CD8-positive, alpha-beta T cell (primary cell): ENCODE measurements at regions of chrX and their contacts with region 1.

Region 1: DNA sequence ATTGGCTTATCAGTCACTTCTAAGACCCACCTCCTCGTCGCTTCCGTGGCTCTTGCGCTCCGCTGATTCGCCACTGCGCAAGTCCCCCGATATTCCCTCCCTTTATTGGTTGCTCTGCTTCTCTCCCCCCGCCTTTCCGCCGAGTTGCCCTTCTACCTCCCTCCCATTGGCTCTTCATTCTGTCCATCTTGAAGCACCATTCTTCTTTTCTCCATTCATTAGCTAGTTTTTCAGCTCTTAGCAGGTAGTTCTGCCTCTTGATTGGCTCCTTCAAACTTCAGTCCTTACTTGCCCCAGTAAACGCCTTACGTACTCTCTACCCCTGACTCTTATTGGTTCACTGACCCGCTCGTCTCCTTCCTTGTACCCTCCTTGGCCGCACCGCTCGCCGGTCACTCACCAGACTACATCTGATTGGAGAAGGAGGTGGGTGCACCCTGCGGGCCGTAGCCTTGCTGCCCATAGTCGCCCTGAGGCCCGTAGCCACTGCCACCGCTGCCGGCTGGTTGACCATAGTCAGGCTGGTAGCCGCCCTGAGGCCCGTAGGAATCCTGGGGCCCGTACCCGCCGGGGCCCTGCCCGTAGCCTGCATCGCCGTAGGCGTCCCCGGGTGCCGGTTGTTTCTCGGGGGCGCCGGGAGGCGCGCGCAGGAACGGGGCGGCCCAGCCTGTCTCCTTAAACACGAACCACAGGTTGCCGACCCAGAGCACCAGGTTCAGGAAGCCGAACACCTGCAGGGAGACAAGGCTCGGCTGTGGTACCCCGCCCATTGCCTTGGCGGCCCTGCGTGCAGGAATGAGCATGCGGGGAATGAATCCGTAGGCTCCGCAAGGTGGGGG is 5.1 kb upstream of the PRICKLE3 start:
- DNase-seq: peak; percentile 62 to 97 (median 78)
- ATAC-seq: peak; percentile 88
- H3K4me3 ChIP-seq: peak overlapping the region; percentile 71 to 77
- H3K4me3 Mint-ChIP-seq: peak overlapping the region; percentile 92
- H3K27ac ChIP-seq: peak overlapping the region; percentile 61 to 72
- H3K27ac Mint-ChIP-seq: peak overlapping the region; percentile 93
- H3K4me1 ChIP-seq: peaks cover 15% of the 10 kb centered on the region
- H3K4me1 Mint-ChIP-seq: peaks cover 26% of the 10 kb centered on the region
- H3K27me3 ChIP-seq: no peaks in the 10 kb centered on the region
- H3K27me3 Mint-ChIP-seq: no peaks in the 10 kb centered on the region
- CTCF ChIP-seq: no peak

Region 2: GRCh38 chrX:48933757-48934156 is 257.5 kb before region 1 on chrX:
- CTCF ChIA-PET with region 1: no interaction called
- POLR2A ChIA-PET with region 1: no interaction called
- intact Hi-C with region 1: no loop called
- DNase-seq: no peak
- ATAC-seq: no peak
- H3K4me3 ChIP-seq: no peak overlapping the region
- H3K4me3 Mint-ChIP-seq: peak overlapping the region; percentile 8
- H3K27ac ChIP-seq: peak overlapping the region in 1 of 2 experiments; percentile 21
- H3K27ac Mint-ChIP-seq: peak overlapping the region; percentile 81
- H3K4me1 ChIP-seq: peaks cover 46% of the 10 kb centered on the region
- H3K4me1 Mint-ChIP-seq: peaks cover 46% of the 10 kb centered on the region
- H3K27me3 ChIP-seq: no peaks in the 10 kb centered on the region
- H3K27me3 Mint-ChIP-seq: no peaks in the 10 kb centered on the region
- CTCF ChIP-seq: no peak

Region 3: GRCh38 chrX:49120099-49120498 is 71.2 kb before region 1 on chrX:
- CTCF ChIA-PET with region 1: no interaction called
- POLR2A ChIA-PET with region 1: no interaction called
- intact Hi-C with region 1: loop called in 1 of 2 experiments (anchors 5 kb)
- DNase-seq: no peak
- ATAC-seq: no peak
- H3K4me3 ChIP-seq: no peak overlapping the region
- H3K4me3 Mint-ChIP-seq: no peak overlapping the region
- H3K27ac ChIP-seq: no peak overlapping the region
- H3K27ac Mint-ChIP-seq: no peak overlapping the region
- H3K4me1 ChIP-seq: peaks cover 26% of the 10 kb centered on the region
- H3K4me1 Mint-ChIP-seq: peaks cover 48% of the 10 kb centered on the region
- H3K27me3 ChIP-seq: no peaks in the 10 kb centered on the region
- H3K27me3 Mint-ChIP-seq: no peaks in the 10 kb centered on the region
- CTCF ChIP-seq: no peak

Region 4: GRCh38 chrX:49163555-49164419 is 27.5 kb before region 1 on chrX:
- CTCF ChIA-PET with region 1: interaction called, 8 read pairs
- POLR2A ChIA-PET with region 1: interaction called, 6 read pairs
- intact Hi-C with region 1: loop called (anchors 2 kb)
- DNase-seq: peak in 8 of 9 experiments; percentile 67 to 91 (median 82)
- ATAC-seq: peak; percentile 54
- H3K4me3 ChIP-seq: peak overlapping the region; percentile 49
- H3K4me3 Mint-ChIP-seq: peak overlapping the region; percentile 81
- H3K27ac ChIP-seq: peak overlapping the region; percentile 56 to 84
- H3K27ac Mint-ChIP-seq: peak overlapping the region; percentile 92
- H3K4me1 ChIP-seq: peaks cover 21% of the 10 kb centered on the region
- H3K4me1 Mint-ChIP-seq: peaks cover 27% of the 10 kb centered on the region
- H3K27me3 ChIP-seq: no peaks in the 10 kb centered on the region
- H3K27me3 Mint-ChIP-seq: no peaks in the 10 kb centered on the region
- CTCF ChIP-seq: peak; percentile 57

Region 5: GRCh38 chrX:49269010-49269767 is 77.9 kb after region 1 on chrX:
- CTCF ChIA-PET with region 1: interaction called, 4 read pairs
- POLR2A ChIA-PET with region 1: interaction called, 4 read pairs
- intact Hi-C with region 1: loop called (anchors 1 to 5 kb)
- DNase-seq: peak; percentile 84 to 98 (median 91)
- ATAC-seq: peak; percentile 84
- H3K4me3 ChIP-seq: peak overlapping the region; percentile 71 to 84
- H3K4me3 Mint-ChIP-seq: peak overlapping the region; percentile 94
- H3K27ac ChIP-seq: peak overlapping the region; percentile 100
- H3K27ac Mint-ChIP-seq: peak overlapping the region; percentile 100
- H3K4me1 ChIP-seq: peaks cover 44% of the 10 kb centered on the region
- H3K4me1 Mint-ChIP-seq: peaks cover 50% of the 10 kb centered on the region
- H3K27me3 ChIP-seq: no peaks in the 10 kb centered on the region
- H3K27me3 Mint-ChIP-seq: no peaks in the 10 kb centered on the region
- CTCF ChIP-seq: no peak

Region 6: GRCh38 chrX:49878834-49879659 is 687.8 kb after region 1 on chrX and contains the start of gene USP27X:
- CTCF ChIA-PET with region 1: no interaction called
- POLR2A ChIA-PET with region 1: no interaction called
- intact Hi-C with region 1: loop called in 1 of 2 experiments (anchors 10 kb)
- DNase-seq: peak; percentile 55 to 92 (median 79)
- ATAC-seq: peak; percentile 91
- H3K4me3 ChIP-seq: peak within 1 kb of the TSS; percentile 58 to 66
- H3K4me3 Mint-ChIP-seq: peak within 1 kb of the TSS; percentile 84
- H3K27ac ChIP-seq: peak within 1 kb of the TSS; percentile 37 to 55
- H3K27ac Mint-ChIP-seq: peak within 1 kb of the TSS; percentile 75
- H3K4me1 ChIP-seq: peaks cover 24% of the 10 kb centered on the region
- H3K4me1 Mint-ChIP-seq: peaks cover 30% of the 10 kb centered on the region
- H3K27me3 ChIP-seq: no peaks in the 10 kb centered on the region
- H3K27me3 Mint-ChIP-seq: no peaks in the 10 kb centered on the region
- CTCF ChIP-seq: peak; percentile 40
- total RNA-seq, gene USP27X: 2.6 to 2.7 TPM